Natural killer cell (primary cell): ENCODE measurements at regions of chr6 and their contacts with region 1.

Region 1: DNA sequence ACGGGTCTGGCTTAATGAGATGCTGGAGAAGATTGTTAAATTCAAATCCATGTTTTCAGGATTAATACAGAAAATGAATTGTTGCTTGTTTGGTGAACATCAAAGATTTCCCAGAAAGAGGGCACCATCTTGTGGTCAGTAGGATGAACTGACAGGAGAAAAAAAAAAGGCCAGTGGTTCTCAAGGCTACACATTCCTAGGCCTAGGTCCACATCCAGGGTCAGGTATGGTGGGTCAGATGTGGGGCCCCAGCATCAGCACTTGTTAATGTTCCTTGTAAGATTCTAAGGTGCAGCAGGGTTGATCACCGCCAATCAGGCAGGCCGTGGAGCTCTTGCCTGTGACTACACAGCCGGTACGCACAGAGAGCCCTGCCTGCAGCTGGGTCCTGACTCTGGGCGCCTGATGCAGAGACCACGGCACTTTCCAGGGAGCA is 34.0 kb upstream of the FOXO3 start:
- DNase-seq: peak in 1 of 2 donors; percentile 60
- ATAC-seq: peak in 1 of 3 donors; percentile 54
- H3K4me3 ChIP-seq: no peak overlapping the region
- H3K4me3 Mint-ChIP-seq: no peak overlapping the region
- H3K27ac ChIP-seq: no peak overlapping the region
- H3K27ac Mint-ChIP-seq: no peak overlapping the region
- H3K4me1 ChIP-seq: no peaks in the 10 kb centered on the region
- H3K4me1 Mint-ChIP-seq: no peaks in the 10 kb centered on the region
- H3K27me3 ChIP-seq: no peaks in the 10 kb centered on the region
- H3K27me3 Mint-ChIP-seq: no peaks in the 10 kb centered on the region
- CTCF ChIP-seq: peak; percentile 75

Region 2: GRCh38 chr6:107977283-107977682 is 549.5 kb before region 1 on chr6:
- intact Hi-C with region 1: loop called (anchors 5 kb)
- DNase-seq: peak in 1 of 2 donors; percentile 24
- ATAC-seq: no peak
- H3K4me3 ChIP-seq: no peak overlapping the region
- H3K4me3 Mint-ChIP-seq: no peak overlapping the region
- H3K27ac ChIP-seq: no peak overlapping the region
- H3K27ac Mint-ChIP-seq: no peak overlapping the region
- H3K4me1 ChIP-seq: peaks cover 6% of the 10 kb centered on the region
- H3K4me1 Mint-ChIP-seq: peaks cover 16% of the 10 kb centered on the region in 2 donors
- H3K27me3 ChIP-seq: no peaks in the 10 kb centered on the region
- H3K27me3 Mint-ChIP-seq: peaks cover 0 to 5% of the 10 kb centered on the region in 2 donors
- CTCF ChIP-seq: no peak

Region 3: DNA sequence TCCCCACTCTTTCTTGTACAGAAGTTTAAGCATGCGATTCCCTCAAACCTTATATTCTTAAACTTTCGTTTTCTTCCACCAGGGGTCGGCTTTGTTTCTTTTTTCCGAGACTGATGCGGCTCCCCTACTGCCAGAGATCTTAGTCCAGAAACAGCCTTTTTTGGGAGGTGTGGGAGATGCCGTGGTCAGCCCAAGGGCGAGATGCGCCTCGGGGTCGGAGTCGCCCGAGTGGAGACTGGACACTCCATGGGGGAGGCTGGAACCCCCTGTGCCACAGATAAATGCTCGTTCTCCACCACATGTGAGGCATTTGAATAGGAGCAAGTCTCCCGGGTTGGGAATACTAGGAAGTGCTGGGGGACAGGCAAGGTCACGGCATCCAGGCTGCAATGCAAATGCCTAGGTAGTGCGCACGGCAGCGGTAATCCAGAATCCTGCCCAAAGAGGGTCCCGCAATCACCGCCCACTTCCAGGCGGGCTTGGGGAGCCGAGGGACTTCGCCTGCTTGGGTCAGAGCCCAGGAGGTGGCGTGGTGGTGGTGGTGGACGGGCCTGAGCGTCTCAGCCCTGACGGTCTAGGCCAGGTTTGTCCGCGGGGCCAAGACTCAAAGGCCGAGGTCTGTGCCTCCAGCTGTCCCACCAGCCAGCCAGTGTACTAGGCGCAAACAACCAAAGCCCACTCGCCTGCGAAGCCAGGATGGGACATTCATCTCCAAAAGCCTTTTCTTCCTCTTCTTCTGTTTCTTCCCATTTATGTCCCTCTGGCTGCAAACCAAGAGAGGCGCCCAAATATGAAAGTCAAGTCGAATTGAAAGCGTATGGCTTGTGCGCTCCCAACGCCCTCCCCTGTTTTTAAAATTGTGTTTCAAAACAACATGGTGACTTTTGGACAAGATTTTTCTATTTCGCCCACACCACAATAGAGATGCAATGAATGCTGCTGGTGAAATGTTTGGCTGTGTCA is 412.9 kb before region 1 on chr6:
- intact Hi-C with region 1: loop called (anchors 1 kb)
- DNase-seq: peak in 1 of 2 donors; percentile 55
- ATAC-seq: no peak
- H3K4me3 ChIP-seq: no peak overlapping the region
- H3K4me3 Mint-ChIP-seq: peak overlapping the region; percentile 42
- H3K27ac ChIP-seq: no peak overlapping the region
- H3K27ac Mint-ChIP-seq: no peak overlapping the region
- H3K4me1 ChIP-seq: peaks cover 42% of the 10 kb centered on the region
- H3K4me1 Mint-ChIP-seq: peaks cover 39 to 44% of the 10 kb centered on the region in 2 donors
- H3K27me3 ChIP-seq: peaks cover 41% of the 10 kb centered on the region
- H3K27me3 Mint-ChIP-seq: peaks cover 67 to 77% of the 10 kb centered on the region in 2 donors
- CTCF ChIP-seq: peak; percentile 43

Region 4: DNA sequence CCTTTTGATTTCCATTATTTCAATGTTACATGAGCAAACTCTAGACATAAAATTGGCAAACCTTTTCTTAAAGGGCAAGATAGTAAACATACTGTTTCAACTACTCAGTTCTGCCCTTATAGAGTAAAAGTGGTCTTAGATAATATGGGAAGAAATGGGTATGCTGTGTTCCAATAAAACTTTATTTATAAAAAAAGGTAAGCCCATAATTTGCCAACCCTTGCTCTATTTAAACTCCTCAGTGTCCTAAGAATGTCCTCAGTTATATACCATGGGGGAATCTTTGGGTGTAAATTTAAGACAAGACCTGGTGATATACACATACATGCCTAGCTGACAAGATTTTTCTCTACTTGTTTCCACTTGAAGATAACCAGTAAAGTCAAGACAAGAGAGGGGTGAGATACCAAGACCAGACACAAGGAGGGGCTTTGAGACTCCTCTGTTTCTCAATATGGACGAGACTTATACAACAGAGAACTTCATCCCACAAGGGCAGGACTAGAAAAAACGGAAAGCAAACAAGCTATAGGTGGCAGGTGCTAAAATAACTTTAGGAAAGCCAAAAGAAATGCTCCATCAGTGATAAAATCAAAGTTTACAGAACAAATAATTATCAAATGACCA is 276.4 kb before region 1 on chr6:
- intact Hi-C with region 1: loop called (anchors 10 kb)
- DNase-seq: peak in 1 of 2 donors; percentile 42
- ATAC-seq: peak in 1 of 3 donors; percentile 55
- H3K4me3 ChIP-seq: no peak overlapping the region
- H3K4me3 Mint-ChIP-seq: no peak overlapping the region
- H3K27ac ChIP-seq: no peak overlapping the region
- H3K27ac Mint-ChIP-seq: no peak overlapping the region
- H3K4me1 ChIP-seq: peaks cover 3% of the 10 kb centered on the region
- H3K4me1 Mint-ChIP-seq: peaks cover 55 to 63% of the 10 kb centered on the region in 2 donors
- H3K27me3 ChIP-seq: no peaks in the 10 kb centered on the region
- H3K27me3 Mint-ChIP-seq: no peaks in the 10 kb centered on the region
- CTCF ChIP-seq: peak; percentile 29

Region 5: DNA sequence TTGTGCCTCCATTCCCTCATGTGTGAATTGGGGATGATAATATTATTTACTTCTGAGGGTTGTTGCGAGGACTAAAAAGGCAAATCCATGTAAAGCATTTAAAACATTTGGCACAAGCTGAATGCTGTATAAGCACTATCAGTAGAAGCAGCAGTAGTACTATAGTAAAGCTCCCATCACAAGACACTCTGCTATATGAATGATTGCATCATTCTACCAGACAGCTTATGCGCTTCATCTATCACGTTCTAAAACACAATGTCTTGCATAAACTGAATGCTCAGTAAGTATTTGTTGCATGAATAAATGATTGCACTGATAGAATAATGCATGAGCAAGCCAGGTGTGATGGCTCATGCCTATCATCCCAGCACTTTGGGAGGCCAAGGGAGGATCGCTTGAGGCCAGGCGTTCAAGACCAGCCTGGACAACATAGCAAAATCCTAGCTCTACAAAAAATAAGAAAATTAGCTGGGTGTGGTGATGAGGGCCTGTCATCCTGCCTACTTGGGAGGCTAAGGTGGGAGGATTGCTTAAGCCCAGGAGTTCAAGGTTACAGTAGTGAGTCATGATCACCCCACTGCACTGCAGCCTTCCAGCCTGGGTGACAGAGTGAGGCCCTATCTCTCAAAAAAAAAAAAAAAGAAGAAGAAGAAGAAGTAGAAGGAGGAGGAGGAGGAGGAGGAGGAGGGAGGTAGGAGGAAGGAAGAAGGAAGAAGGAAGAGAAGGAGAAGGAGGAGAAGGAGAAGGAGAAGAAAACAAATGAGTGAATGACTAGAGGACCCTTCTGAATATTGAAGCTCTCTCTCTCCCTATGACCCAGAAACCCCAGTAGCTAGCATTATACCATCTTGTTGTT is 16.1 kb before region 1 on chr6:
- intact Hi-C with region 1: no loop called
- DNase-seq: no peak
- ATAC-seq: no peak
- H3K4me3 ChIP-seq: no peak overlapping the region
- H3K4me3 Mint-ChIP-seq: no peak overlapping the region
- H3K27ac ChIP-seq: no peak overlapping the region
- H3K27ac Mint-ChIP-seq: no peak overlapping the region
- H3K4me1 ChIP-seq: no peaks in the 10 kb centered on the region
- H3K4me1 Mint-ChIP-seq: no peaks in the 10 kb centered on the region
- H3K27me3 ChIP-seq: no peaks in the 10 kb centered on the region
- H3K27me3 Mint-ChIP-seq: no peaks in the 10 kb centered on the region
- CTCF ChIP-seq: no peak